Caco-2 (cell line): ENCODE measurements at regions of chr4 and their contacts with region 1.

Region 1: GRCh38 chr4:13548984-13549546 is 4.8 kb upstream of the NKX3-2 start:
- DNase-seq: peak; percentile 83 to 88
- H3K4me3 ChIP-seq: peak overlapping the region; percentile 50
- H3K4me3 Mint-ChIP-seq: peak overlapping the region; percentile 80
- H3K27ac Mint-ChIP-seq: peak overlapping the region; percentile 64
- H3K4me1 ChIP-seq: no peaks in the 10 kb centered on the region
- H3K4me1 Mint-ChIP-seq: no peaks in the 10 kb centered on the region
- H3K27me3 ChIP-seq: no peaks in the 10 kb centered on the region
- H3K27me3 Mint-ChIP-seq: peaks cover 8% of the 10 kb centered on the region
- CTCF ChIP-seq: peak; percentile 83 to 91

Region 2: GRCh38 chr4:12729384-12729783 is 819.7 kb before region 1 on chr4:
- CTCF ChIA-PET with region 1: no interaction called
- POLR2A ChIA-PET with region 1: no interaction called
- intact Hi-C with region 1: loop called (anchors 1 kb)
- DNase-seq: no peak
- H3K4me3 ChIP-seq: no peak overlapping the region
- H3K4me3 Mint-ChIP-seq: no peak overlapping the region
- H3K27ac Mint-ChIP-seq: no peak overlapping the region
- H3K4me1 ChIP-seq: 0 out of 2 replicates have a peak, but pooled peaks cover 2% of the 10 kb centered on the region
- H3K4me1 Mint-ChIP-seq: no peaks in the 10 kb centered on the region
- H3K27me3 ChIP-seq: no peaks in the 10 kb centered on the region
- H3K27me3 Mint-ChIP-seq: peaks cover 16% of the 10 kb centered on the region
- CTCF ChIP-seq: peak in 1 of 2 experiments; percentile 24

Region 3: DNA sequence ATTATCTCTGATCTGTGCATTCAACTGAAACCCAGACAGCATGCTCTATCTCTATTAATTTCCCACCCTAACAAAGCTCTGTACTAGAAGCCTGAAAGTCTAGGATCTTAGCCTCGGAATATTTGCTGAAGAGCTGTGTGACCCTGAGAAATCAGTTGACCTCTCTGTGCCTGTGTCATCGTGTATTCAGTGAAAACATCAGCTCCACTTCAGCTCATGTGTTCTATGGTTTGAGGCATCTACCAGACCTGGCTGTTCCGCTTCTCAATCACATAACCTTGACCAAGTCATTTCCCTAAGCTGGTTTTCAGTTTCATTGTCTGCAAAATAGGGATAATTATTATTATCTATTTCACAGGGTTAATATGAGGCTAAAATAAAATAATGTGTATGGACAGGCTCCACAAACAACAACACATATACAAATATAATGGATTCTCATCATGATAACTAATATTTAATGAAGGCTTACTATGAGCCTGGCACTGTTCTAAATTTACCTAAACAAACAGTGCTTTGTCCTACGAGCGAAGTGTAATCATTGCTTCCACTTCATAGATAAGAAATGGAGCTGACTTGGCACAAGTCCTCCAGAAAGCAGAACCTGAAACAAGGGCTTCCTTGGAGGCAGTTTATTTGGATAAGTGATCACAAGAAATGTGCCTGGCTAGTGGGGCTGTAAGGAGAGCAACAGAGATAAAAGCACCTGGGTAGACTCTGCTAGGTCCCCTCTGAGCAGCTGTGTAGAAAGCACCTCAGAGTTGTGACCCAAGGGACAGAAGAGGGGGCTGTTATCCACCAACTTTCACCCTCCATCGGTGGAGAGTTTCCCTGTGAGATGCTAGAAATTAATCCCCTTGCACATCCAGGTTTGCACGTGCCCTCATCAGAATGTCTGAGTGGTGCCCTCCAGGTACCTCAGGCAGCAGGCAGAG is 421.8 kb before region 1 on chr4:
- CTCF ChIA-PET with region 1: no interaction called
- POLR2A ChIA-PET with region 1: no interaction called
- intact Hi-C with region 1: loop called (anchors 5 kb)
- DNase-seq: no peak
- H3K4me3 ChIP-seq: no peak overlapping the region
- H3K4me3 Mint-ChIP-seq: no peak overlapping the region
- H3K27ac Mint-ChIP-seq: no peak overlapping the region
- H3K4me1 ChIP-seq: no peaks in the 10 kb centered on the region
- H3K4me1 Mint-ChIP-seq: no peaks in the 10 kb centered on the region
- H3K27me3 ChIP-seq: no peaks in the 10 kb centered on the region
- H3K27me3 Mint-ChIP-seq: peaks cover 5% of the 10 kb centered on the region
- CTCF ChIP-seq: no peak

Region 4: DNA sequence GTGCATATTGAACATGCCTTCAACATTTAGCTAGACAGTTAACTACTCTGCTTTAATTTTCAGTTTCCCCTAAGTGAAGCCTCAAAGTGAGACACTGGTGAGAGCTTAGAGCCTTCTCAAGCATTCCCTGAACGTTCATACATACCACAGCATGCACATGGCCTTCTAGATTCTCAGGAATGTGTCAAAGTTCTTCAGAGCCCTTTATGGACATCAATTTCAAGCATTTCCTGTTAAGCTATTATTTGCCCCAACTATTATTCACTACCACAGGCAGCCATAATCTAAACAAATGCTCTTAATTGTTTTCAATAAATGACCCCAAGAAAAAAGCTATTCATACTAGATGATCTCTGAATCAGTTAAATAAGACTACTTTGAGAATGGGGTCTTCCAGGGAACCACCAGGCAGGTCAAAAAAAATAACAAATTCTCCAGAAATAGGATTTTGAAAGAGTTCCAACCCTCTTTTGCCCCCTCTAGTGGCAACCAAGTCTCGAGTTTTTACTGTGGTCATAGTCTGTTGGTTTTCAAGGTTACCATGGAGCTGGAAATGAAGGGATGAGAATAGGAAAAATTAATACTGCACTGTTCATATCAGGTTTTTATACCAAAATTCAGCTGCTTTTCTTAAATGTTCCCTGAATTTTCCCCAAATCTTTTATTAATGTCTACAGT is 300.3 kb before region 1 on chr4:
- CTCF ChIA-PET with region 1: no interaction called
- POLR2A ChIA-PET with region 1: no interaction called
- intact Hi-C with region 1: loop called (anchors 10 kb)
- DNase-seq: peak in 1 of 2 experiments; percentile 4
- H3K4me3 ChIP-seq: no peak overlapping the region
- H3K4me3 Mint-ChIP-seq: no peak overlapping the region
- H3K27ac Mint-ChIP-seq: no peak overlapping the region
- H3K4me1 ChIP-seq: no peaks in the 10 kb centered on the region
- H3K4me1 Mint-ChIP-seq: no peaks in the 10 kb centered on the region
- H3K27me3 ChIP-seq: no peaks in the 10 kb centered on the region
- H3K27me3 Mint-ChIP-seq: no peaks in the 10 kb centered on the region
- CTCF ChIP-seq: peak; percentile 26 to 37

Region 5: DNA sequence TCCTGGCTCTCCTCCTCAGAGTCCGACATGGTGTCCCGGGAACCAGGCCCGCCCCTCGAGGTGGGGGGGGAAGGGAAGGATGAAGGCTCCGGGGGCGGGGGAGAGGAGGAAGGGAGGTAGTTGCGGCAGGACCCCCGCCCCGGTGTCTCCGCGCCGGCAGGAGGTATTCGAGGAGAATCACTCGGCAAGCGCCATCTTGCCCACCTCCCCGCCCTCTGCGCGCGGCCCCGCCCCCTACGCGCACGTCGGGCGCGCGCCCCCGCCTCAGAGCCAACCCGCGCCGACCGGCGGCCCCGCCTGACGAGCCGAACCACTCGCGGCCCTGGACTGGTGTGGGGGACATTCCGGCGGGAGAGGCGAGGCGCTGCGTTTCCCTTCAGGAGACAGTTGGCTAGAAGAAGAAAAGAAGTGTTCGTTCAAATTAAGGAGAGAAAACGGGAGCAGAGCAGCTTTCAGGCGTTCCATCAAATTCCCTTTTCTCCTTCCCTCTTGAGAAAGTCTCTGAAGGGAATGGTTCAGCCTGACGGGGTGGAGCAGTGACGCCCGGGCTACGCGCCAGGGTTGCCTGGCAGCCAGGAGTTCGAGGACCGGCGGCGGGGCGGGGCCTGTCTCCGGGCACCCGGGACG is 64.8 kb before region 1 on chr4 and contains the start of gene RAB28:
- CTCF ChIA-PET with region 1: no interaction called
- POLR2A ChIA-PET with region 1: no interaction called
- intact Hi-C with region 1: loop called (anchors 1 kb)
- DNase-seq: peak; percentile 88 to 93
- H3K4me3 ChIP-seq: peak within 1 kb of the TSS; percentile 95
- H3K4me3 Mint-ChIP-seq: peak within 1 kb of the TSS; percentile 93
- H3K27ac Mint-ChIP-seq: peak within 1 kb of the TSS; percentile 98
- H3K4me1 ChIP-seq: no peaks in the 10 kb centered on the region
- H3K4me1 Mint-ChIP-seq: peaks cover 11% of the 10 kb centered on the region
- H3K27me3 ChIP-seq: no peaks in the 10 kb centered on the region
- H3K27me3 Mint-ChIP-seq: peaks cover 7% of the 10 kb centered on the region
- CTCF ChIP-seq: no peak
- total RNA-seq, gene RAB28: 12.7 and 14.5 TPM in 2 replicates

Region 6: GRCh38 chr4:14215103-14215770 is 666.2 kb after region 1 on chr4:
- CTCF ChIA-PET with region 1: no interaction called
- POLR2A ChIA-PET with region 1: no interaction called
- intact Hi-C with region 1: no loop called
- DNase-seq: no peak
- H3K4me3 ChIP-seq: no peak overlapping the region
- H3K4me3 Mint-ChIP-seq: no peak overlapping the region
- H3K27ac Mint-ChIP-seq: no peak overlapping the region
- H3K4me1 ChIP-seq: no peaks in the 10 kb centered on the region
- H3K4me1 Mint-ChIP-seq: peaks cover 17% of the 10 kb centered on the region
- H3K27me3 ChIP-seq: no peaks in the 10 kb centered on the region
- H3K27me3 Mint-ChIP-seq: no peaks in the 10 kb centered on the region
- CTCF ChIP-seq: no peak